H1 (cell line): ENCODE measurements at regions of chr2 and their contacts with region 1.

Region 1: GRCh38 chr2:63424329-63425078 is 163.8 kb downstream of the WDPCP start:
- DNase-seq: peak; percentile 19 to 64
- H3K4me3 ChIP-seq: no peak overlapping the region
- H3K27ac ChIP-seq: no peak overlapping the region
- H3K4me1 ChIP-seq: no peaks in the 10 kb centered on the region
- H3K27me3 ChIP-seq: no peaks in the 10 kb centered on the region
- CTCF ChIP-seq: peak in 2 of 3 experiments; percentile 65 to 83; a peak in 3 of 4 replicates
- EP300 ChIP-seq: no peak
- POLR2A ChIP-seq: no peak
- RAD21 ChIP-seq: peak; percentile 77 to 85

Region 2: GRCh38 chr2:63440612-63441011 is 16.1 kb after region 1 on chr2:
- CTCF ChIA-PET with region 1: interaction called, 22 read pairs
- POLR2A ChIA-PET with region 1: no interaction called
- DNase-seq: no peak
- H3K4me3 ChIP-seq: no peak overlapping the region
- H3K27ac ChIP-seq: no peak overlapping the region
- H3K4me1 ChIP-seq: no peaks in the 10 kb centered on the region; a peak in 1 of 7 replicates
- H3K27me3 ChIP-seq: no peaks in the 10 kb centered on the region
- CTCF ChIP-seq: no peak
- EP300 ChIP-seq: no peak
- POLR2A ChIP-seq: no peak
- RAD21 ChIP-seq: no peak

Region 3: DNA sequence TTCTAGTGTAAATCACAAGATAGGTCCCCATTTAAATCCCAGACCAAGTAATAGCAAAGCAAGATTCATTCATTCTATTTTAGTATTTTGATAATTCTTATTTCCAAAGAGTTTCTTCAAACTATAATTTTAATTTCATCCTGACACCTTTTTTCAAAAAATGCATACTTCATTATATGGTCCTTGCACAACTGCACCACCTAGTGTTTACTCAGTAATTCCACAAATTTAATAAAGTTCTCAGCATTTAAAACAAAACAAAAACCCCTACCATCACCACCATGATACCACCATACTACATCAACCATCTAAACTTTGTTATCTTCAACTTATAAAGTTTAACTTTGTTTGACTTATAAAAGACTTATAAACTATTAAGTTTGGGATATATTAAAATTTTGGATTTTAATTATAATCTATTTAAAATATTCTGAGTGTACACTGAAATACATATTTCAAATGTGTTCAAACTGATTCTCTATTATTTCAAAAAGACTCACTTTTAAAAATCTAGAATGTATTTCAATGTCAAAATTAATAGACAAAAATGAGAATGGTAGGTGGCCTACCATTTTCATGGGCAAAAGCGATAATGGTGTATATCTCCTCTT is 119.6 kb after region 1 on chr2:
- CTCF ChIA-PET with region 1: no interaction called
- POLR2A ChIA-PET with region 1: no interaction called
- DNase-seq: no peak
- H3K4me3 ChIP-seq: no peak overlapping the region
- H3K27ac ChIP-seq: no peak overlapping the region
- H3K4me1 ChIP-seq: peaks cover 0 to 6% (median 0%) of the 10 kb centered on the region in 4 experiments; a peak in 3 of 7 replicates
- H3K27me3 ChIP-seq: no peaks in the 10 kb centered on the region
- CTCF ChIP-seq: peak in 2 of 3 experiments; percentile 5 to 19; a peak in 2 of 4 replicates
- EP300 ChIP-seq: no peak
- POLR2A ChIP-seq: no peak
- RAD21 ChIP-seq: peak in 1 of 2 experiments; percentile 44